Activated CD8-positive, alpha-beta memory T cell treated with anti-CD3 and anti-CD28 coated beads, Interleukin-2, amount 10 ng/mL, durations not matched to agents 7 days and 5 days (primary cell): ENCODE measurements at regions of chr3 and their contacts with region 1.

Region 1: GRCh38 chr3:196179380-196180308 is 31.6 kb downstream of the ZDHHC19 start:
- DNase-seq: peak; percentile 98
- ATAC-seq: peak; percentile 82
- H3K4me3 Mint-ChIP-seq: peak overlapping the region; percentile 57
- H3K27ac Mint-ChIP-seq: peak overlapping the region; percentile 99
- H3K4me1 Mint-ChIP-seq: peaks cover 65% of the 10 kb centered on the region
- H3K27me3 Mint-ChIP-seq: no peaks in the 10 kb centered on the region

Region 2: DNA sequence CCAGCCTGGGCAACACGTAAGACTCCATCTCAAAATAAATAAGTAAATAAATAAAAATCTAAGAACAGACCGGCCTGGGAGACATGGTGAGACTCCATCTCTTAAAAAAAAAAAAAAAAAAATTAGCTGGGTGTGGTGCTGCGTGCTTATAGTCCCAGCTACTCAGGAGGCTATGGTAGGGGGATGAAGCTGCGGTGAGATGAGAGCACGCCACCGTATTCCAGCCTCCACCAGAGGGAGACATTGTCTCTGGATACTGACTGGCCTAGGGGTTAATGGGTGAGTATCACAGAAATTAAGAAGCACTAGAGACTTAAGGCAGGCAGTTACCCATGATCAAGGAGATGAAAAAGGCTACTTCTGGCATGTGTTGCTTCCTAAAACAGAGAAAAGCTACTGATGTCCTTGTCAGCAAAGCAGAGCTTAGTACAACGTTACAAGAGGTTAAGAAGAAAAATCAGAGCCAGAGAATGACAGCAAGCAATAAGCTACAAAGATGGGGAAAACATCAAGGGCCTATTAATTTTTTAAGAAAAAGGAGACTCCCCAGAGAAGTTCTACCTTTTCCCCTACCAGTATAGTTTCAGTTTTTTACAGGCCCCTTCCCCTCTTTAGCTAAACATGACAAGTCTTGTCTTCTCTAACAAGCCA is 106.3 kb before region 1 on chr3:
- CTCF ChIA-PET with region 1: interaction called, 238 read pairs
- DNase-seq: peak; percentile 80
- ATAC-seq: peak; percentile 92
- H3K4me3 Mint-ChIP-seq: no peak overlapping the region
- H3K27ac Mint-ChIP-seq: peak overlapping the region; percentile 71
- H3K4me1 Mint-ChIP-seq: peaks cover 47% of the 10 kb centered on the region
- H3K27me3 Mint-ChIP-seq: no peaks in the 10 kb centered on the region

Region 3: GRCh38 chr3:196081791-196082618 is 97.6 kb before region 1 on chr3 and contains the start of gene TFRC:
- CTCF ChIA-PET with region 1: interaction called, 238 read pairs
- DNase-seq: peak; percentile 96
- ATAC-seq: peak; percentile 87
- H3K4me3 Mint-ChIP-seq: peak within 1 kb of the TSS; percentile 100
- H3K27ac Mint-ChIP-seq: peak within 1 kb of the TSS; percentile 97
- H3K4me1 Mint-ChIP-seq: peaks cover 38% of the 10 kb centered on the region
- H3K27me3 Mint-ChIP-seq: no peaks in the 10 kb centered on the region
- total RNA-seq, gene TFRC: 409 to 782 TPM

Region 4: GRCh38 chr3:196127295-196128040 is 52.2 kb before region 1 on chr3:
- CTCF ChIA-PET with region 1: interaction called, 25 read pairs
- DNase-seq: peak; percentile 81
- ATAC-seq: peak; percentile 84
- H3K4me3 Mint-ChIP-seq: peak overlapping the region; percentile 36
- H3K27ac Mint-ChIP-seq: peak overlapping the region; percentile 94
- H3K4me1 Mint-ChIP-seq: peaks cover 38% of the 10 kb centered on the region
- H3K27me3 Mint-ChIP-seq: no peaks in the 10 kb centered on the region

Region 5: DNA sequence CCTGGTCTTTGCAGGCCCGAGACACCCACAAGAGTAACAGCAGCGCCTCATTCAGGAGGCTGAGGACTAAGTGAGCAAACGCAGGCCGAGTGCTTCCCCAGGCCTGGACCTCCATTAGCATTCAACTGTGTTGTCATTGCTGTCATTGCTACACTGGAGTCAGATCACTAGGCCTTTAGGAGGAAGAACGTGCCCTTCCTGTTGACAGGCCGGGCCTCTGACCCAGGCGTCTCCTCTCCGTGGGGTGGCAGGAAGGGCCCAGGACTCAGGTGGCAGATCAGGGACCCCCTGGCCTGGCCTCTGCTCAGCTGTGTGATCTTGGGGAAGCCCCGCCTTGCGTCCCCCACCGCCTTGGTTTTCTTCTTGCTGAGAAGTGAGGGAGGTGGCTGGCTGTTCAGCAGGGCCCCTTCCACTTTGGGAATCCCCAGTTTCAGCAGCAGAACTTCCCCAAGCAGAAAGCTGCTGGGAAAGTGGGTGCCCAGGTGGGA is 12.4 kb after region 1 on chr3:
- CTCF ChIA-PET with region 1: interaction called, 54 read pairs
- DNase-seq: peak; percentile 72
- ATAC-seq: peak; percentile 40
- H3K4me3 Mint-ChIP-seq: peak overlapping the region; percentile 45
- H3K27ac Mint-ChIP-seq: peak overlapping the region; percentile 97
- H3K4me1 Mint-ChIP-seq: peaks cover 54% of the 10 kb centered on the region
- H3K27me3 Mint-ChIP-seq: no peaks in the 10 kb centered on the region

Region 6: GRCh38 chr3:196207833-196208607 is 28.4 kb after region 1 on chr3:
- CTCF ChIA-PET with region 1: no interaction called
- DNase-seq: peak; percentile 72
- ATAC-seq: peak; percentile 83
- H3K4me3 Mint-ChIP-seq: peak overlapping the region; percentile 77
- H3K27ac Mint-ChIP-seq: peak overlapping the region; percentile 44
- H3K4me1 Mint-ChIP-seq: peaks cover 15% of the 10 kb centered on the region
- H3K27me3 Mint-ChIP-seq: peaks cover 32% of the 10 kb centered on the region